ENCODE measurements at regions of chr6 and their contacts with region 1.

Region 1: DNA sequence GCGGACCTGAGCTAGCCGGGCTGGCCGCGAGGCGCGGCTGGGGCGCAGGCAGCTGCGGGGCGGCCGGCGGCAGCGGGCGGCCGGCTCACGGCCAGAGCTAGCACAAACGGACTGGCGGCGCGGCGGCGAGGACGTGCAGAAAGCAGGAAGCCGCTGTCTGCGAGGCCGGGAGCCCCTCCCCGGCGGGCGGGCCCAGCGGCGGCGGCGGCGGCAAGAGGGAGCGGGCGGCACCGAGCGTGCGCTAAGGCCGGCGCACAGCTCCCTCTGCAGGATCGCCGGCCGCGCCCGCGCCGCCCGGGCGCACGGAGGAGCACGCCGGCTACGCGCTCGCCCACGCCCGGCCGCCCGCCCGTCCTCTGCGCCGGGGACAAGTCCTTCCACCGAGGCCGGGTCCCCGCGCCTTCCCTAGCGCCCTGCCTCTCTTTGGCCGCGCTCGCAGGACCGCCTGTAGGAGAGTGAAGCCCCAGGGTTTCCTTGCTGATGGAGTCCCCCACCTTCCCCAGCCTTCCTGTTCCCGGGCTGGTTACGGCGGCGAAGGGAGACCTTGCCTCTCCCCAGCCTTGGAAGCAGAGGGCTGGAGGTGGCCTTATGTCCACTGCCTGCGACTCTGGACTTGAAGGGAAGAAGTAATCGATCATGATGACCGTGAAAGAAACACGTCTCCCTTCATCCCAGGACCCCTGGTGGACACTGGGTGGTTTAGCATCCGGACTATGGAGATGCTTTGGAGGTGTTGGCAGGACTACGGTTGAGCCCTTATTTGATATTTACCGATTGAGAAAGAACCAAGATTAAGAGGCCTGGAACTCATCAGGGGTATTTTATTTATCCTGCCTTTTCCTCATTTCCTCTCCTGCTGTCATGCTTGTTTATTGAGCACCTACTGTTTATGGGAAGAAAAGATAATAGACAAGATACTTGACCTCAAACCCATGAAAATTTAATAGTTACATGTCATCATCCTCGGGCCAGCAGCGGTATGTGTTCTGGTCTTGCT is at the start of gene PREP:
- DNase-seq: peak; percentile 77 to 88 (median 81)
- H3K4me3 ChIP-seq: peak within 1 kb of the TSS; percentile 89
- H3K27ac ChIP-seq: peak within 1 kb of the TSS; percentile 54 to 90
- H3K4me1 ChIP-seq: peaks cover 6% of the 10 kb centered on the region
- H3K27me3 ChIP-seq: no peaks in the 10 kb centered on the region
- CTCF ChIP-seq: peak; percentile 13 to 83 (median 72)
- EP300 ChIP-seq: no peak
- POLR2A ChIP-seq: no peak
- total RNA-seq, gene PREP: 12.5 to 25.5 (median 21.8) TPM

Region 2: DNA sequence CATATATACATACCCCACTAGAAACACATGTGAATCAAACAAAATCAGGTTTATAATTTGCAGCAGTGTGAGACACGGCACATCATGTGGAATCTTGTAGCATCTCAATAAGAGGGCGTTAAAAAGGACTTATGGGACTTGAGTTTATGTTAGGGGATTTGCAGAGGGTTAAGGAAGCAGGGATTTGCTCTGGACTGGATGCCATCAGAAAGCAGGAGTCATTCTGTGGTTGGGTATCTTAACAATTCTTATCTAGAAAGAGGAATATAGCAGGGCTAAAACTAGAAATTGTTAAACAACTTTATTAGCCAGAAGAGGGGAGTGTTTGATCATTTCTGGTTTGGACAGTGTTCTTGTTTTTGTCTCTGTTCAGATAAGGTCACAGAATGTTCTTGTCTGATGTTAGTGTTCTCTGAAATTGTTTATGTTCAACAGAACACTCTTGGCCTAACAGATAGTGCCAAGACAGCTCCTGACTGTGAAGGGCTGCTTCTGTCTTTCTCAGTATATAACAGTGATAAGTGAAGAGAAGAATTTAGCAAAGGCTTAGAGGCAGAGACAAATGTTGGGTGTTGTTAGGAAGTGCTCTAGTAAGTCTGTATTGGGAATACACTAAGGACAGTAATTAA is 407.1 kb before region 1 on chr6:
- intact Hi-C with region 1: loop called in 1 of 4 experiments (anchors 10 kb)
- DNase-seq: peak in 1 of 5 donors; percentile 13
- H3K4me3 ChIP-seq: no peak overlapping the region
- H3K27ac ChIP-seq: no peak overlapping the region
- H3K4me1 ChIP-seq: peaks cover 1% of the 10 kb centered on the region
- H3K27me3 ChIP-seq: peaks cover 2% of the 10 kb centered on the region
- CTCF ChIP-seq: peak in 1 of 3 donors; percentile 25
- EP300 ChIP-seq: no peak
- POLR2A ChIP-seq: no peak

Region 3: DNA sequence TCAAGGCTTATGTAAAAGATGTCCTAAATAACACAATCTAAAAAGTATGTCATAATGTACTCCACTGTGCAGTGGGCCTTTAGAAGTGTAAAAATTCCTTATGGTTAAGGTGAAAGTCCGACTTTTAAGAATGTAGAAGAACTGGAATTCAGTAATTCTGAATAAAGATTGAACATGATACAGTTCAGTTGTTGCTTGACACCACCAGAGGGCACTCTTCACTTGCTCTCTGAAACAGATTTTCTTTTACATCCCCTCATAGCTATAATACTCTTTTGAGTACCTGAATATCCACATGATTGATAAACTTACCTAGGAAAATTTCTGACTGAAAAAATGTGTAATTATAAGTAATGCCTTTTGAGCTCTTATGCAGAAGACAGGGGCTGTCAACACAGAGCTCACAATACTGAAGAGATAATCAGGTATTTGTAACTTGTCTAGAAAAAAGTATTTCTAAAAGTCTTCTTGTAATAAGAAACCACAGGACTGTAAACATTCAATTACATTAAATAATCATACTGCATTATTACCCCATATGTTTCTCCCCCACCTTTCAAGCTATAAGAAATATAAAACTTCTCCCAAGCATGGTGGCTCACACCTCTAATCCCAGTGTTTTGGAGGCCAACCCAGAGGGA is 315.5 kb before region 1 on chr6:
- intact Hi-C with region 1: loop called (anchors 5 to 10 kb)
- DNase-seq: peak in 2 of 5 donors; percentile 13 to 47
- H3K4me3 ChIP-seq: no peak overlapping the region
- H3K27ac ChIP-seq: no peak overlapping the region
- H3K4me1 ChIP-seq: no peaks in the 10 kb centered on the region
- H3K27me3 ChIP-seq: no peaks in the 10 kb centered on the region
- CTCF ChIP-seq: peak; percentile 35 to 70 (median 58)
- EP300 ChIP-seq: no peak
- POLR2A ChIP-seq: no peak

Region 4: GRCh38 chr6:105097288-105097687 is 305.9 kb before region 1 on chr6:
- intact Hi-C with region 1: loop called in 1 of 4 experiments (anchors 10 kb)
- DNase-seq: no peak
- H3K4me3 ChIP-seq: no peak overlapping the region
- H3K27ac ChIP-seq: no peak overlapping the region
- H3K4me1 ChIP-seq: no peaks in the 10 kb centered on the region
- H3K27me3 ChIP-seq: no peaks in the 10 kb centered on the region
- CTCF ChIP-seq: no peak
- EP300 ChIP-seq: no peak
- POLR2A ChIP-seq: no peak

Region 5: DNA sequence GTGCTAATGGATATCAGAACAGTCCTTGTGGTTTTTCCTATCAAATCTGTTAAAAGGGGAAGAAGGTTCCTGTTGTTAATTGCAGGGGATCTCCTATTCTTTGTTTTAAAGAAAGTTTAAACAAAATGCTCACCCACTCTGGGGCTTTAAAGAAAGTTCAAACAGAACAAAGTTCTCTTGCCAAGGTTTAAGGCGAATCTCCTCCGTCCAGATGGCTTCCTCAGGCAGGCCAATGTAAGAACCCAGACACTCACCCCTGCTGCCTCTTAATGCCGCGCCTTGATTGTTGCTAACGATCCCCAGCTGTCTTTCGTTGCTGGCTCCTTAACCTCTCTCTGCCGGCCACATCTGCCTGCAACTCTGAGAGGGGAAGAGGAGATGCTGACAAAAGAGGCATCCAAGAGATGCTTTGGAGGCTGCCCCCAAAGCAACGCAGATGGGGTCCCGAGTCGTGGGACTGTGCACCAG is 447.9 kb after region 1 on chr6:
- intact Hi-C with region 1: no loop called
- DNase-seq: peak in 1 of 5 donors; percentile 19
- H3K4me3 ChIP-seq: no peak overlapping the region
- H3K27ac ChIP-seq: no peak overlapping the region
- H3K4me1 ChIP-seq: no peaks in the 10 kb centered on the region
- H3K27me3 ChIP-seq: no peaks in the 10 kb centered on the region
- CTCF ChIP-seq: no peak
- EP300 ChIP-seq: no peak
- POLR2A ChIP-seq: no peak

Measured in ovary (tissue), 10 donors.